ENCODE measurements at regions of chr11 and their contacts with region 1.

Region 1: GRCh38 chr11:57657194-57658022 is at the start of gene CLP1:
- DNase-seq: peak; percentile 98 to 100
- H3K4me3 ChIP-seq: peak within 1 kb of the TSS; percentile 96
- H3K27ac ChIP-seq: peak within 1 kb of the TSS; percentile 25
- H3K4me1 ChIP-seq: peaks cover 7% of the 10 kb centered on the region
- H3K27me3 ChIP-seq: no peaks in the 10 kb centered on the region
- CTCF ChIP-seq: peak; percentile 13; the same call in 1 of the 2 replicates
- total RNA-seq, gene CLP1: 23.4 and 24.2 TPM in 2 replicates

Region 2: DNA sequence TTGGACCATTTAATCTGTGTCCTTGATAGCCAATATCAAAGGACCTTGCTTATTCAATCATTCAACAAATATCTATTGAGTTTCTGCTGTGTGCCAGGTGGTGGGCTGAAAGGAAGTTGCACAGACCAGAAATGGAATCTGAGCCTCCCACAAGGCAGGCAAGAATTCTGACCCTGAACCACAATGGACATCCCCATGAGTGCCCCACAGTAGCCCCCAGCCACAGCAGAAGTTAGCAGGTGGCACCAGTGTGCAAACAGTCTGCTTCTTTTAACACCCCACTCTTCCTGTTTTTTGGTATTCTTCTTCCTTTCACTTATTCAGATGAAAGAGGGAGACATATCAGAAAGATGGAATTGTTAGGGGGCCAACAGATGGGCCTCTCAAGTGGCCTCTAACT is 72.1 kb before region 1 on chr11:
- CTCF ChIA-PET with region 1: no interaction called
- POLR2A ChIA-PET with region 1: no interaction called
- intact Hi-C with region 1: no loop called
- DNase-seq: no peak
- H3K4me3 ChIP-seq: no peak overlapping the region
- H3K27ac ChIP-seq: no peak overlapping the region
- H3K4me1 ChIP-seq: no peaks in the 10 kb centered on the region
- H3K27me3 ChIP-seq: no peaks in the 10 kb centered on the region
- CTCF ChIP-seq: no peak

Region 3: DNA sequence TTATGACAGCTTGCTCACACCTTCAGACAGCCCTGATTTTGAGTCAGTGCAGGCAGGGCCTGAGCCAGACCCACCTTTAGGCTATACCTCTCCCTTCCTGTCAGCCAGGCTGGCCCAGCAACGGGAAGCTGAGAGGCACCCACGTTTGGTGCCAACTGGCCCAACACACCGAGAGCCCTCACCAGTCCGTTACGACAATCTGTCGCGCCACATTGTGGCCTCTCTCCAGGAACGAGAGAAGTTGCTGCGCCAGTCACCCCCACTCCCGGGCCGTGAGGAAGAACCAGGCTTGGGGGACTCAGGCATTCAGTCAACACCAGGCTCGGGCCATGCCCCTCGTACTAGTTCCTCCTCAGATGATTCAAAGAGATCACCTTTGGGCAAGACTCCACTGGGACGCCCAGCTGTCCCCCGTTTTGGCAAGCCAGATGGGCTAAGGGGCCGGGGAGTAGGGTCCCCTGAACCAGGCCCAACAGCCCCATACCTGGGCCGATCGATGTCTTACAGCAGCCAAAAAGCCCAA is 41.5 kb after region 1 on chr11:
- CTCF ChIA-PET with region 1: no interaction called
- POLR2A ChIA-PET with region 1: interaction called, 24 read pairs
- intact Hi-C with region 1: no loop called
- DNase-seq: no peak
- H3K4me3 ChIP-seq: no peak overlapping the region
- H3K27ac ChIP-seq: no peak overlapping the region
- H3K4me1 ChIP-seq: no peaks in the 10 kb centered on the region
- H3K27me3 ChIP-seq: no peaks in the 10 kb centered on the region
- CTCF ChIP-seq: no peak

Measured in PC-9 (cell line).